Posterior vena cava (tissue), 2 donors: ENCODE measurements at regions of chr14 and their contacts with region 1.

Region 1: GRCh38 chr14:44701563-44702263 is 194.6 kb upstream of the FSCB start:
- DNase-seq: no peak

Region 2: DNA sequence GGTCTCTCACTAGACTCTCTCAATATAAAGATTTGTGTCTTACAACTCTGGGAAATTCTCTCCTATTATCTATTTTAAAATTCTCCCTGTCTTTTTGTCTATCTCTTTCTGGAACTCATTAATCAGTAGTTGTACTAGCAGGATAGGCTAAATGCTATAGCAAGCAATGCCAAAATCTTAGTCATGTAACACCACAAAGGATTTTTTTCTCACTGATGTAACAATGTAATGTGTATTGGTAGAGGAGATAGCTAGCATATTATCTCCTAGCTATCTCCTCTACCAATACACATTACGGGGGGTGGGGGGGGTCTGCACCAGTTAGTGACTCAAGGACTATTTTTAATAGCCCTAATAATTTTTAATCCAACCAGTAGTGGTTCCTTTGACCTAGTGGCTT is 34.6 kb after region 1 on chr14:
- intact Hi-C with region 1: loop called in 1 of 2 experiments (anchors 2 kb)
- DNase-seq: no peak

Region 3: GRCh38 chr14:45095143-45095542 is 393.4 kb after region 1 on chr14:
- intact Hi-C with region 1: no loop called
- DNase-seq: no peak

Region 4: DNA sequence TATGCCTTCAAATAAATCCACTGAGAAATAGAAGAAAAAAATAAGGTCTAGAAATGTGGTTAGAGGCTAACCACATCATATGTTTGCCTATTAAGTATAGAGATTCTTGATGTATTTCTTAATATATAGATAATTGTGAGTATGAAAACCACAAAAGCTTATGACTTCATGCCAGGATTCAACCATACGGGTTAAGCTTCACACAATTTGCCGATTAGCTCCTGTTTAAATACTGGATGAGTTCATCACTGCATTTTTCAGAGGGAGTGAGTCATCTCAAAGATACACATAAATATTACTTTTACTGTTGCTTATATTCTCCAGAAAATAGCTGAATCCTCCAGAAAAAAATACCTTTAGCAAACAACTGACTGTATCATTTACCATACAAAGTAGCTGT is 1870.3 kb after region 1 on chr14:
- intact Hi-C with region 1: no loop called
- DNase-seq: no peak